Activated naive CD4-positive, alpha-beta T cell treated with anti-CD3 and anti-CD28 coated beads for 36 hours (primary cell): ENCODE measurements at regions of chr10 and their contacts with region 1.

Region 1: GRCh38 chr10:100009793-100010676 is at the start of gene DNMBP:
- DNase-seq: peak; percentile 82
- H3K4me3 Mint-ChIP-seq: peak within 1 kb of the TSS; percentile 85
- H3K27ac Mint-ChIP-seq: peak within 1 kb of the TSS; percentile 37
- H3K4me1 Mint-ChIP-seq: peaks cover 38% of the 10 kb centered on the region
- H3K27me3 Mint-ChIP-seq: peaks cover 7% of the 10 kb centered on the region
- total RNA-seq, gene DNMBP: 2.2 to 2.4 TPM

Region 2: DNA sequence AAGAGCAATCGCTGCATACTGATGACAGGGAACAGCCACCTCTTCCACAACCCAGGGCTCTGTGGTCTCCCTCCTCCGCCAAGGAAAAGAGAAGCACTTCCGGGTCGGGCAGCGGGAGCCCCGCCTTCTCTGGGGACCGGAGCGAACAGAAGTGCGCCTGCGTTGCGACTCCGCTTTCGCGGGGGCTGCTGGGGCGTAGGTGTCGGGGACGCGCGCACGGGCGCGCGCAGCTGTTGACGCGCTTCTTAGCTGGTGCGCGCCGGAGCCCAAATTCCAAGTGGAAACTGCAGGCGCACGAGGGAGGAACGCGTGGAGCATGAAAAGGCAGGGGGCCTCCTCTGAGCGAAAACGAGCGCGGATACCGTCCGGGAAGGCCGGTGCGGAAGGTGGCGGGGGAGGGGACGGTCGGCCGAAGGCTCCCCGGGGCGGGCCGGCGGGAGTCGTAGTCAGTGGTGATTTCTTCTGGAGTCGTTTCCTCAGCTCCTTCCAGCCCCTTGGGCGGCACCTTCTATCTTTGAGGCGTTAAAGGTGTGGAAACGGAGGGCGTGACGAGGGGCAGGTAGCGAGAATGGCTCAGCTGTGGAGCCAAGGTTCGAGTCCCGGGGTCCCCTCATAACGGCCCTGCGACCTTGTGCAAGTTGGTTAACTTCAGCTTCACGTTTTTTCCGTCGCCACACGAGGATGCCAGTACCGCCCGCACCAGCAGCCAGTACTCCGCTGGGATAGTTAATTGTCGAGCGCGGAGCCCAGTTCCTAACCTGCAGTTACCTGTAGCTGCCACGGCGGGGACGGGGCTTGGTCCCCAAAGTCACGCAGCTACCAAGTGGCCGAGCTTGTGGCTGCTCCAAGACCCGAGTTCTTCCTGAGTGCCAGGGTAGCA is 277.8 kb before region 1 on chr10 and contains the starts of genes COX15 and CUTC:
- CTCF ChIA-PET with region 1: no interaction called
- intact Hi-C with region 1: loop called (anchors 5 kb)
- DNase-seq: peak; percentile 96
- H3K4me3 Mint-ChIP-seq: peak within 1 kb of the TSS; percentile 99
- H3K27ac Mint-ChIP-seq: peak within 1 kb of the TSS; percentile 96
- H3K4me1 Mint-ChIP-seq: peaks cover 32% of the 10 kb centered on the region
- H3K27me3 Mint-ChIP-seq: no peaks in the 10 kb centered on the region
- total RNA-seq, gene COX15: 36.3 to 38.8 TPM
- total RNA-seq, gene CUTC: 21.6 to 21.9 TPM

Region 3: DNA sequence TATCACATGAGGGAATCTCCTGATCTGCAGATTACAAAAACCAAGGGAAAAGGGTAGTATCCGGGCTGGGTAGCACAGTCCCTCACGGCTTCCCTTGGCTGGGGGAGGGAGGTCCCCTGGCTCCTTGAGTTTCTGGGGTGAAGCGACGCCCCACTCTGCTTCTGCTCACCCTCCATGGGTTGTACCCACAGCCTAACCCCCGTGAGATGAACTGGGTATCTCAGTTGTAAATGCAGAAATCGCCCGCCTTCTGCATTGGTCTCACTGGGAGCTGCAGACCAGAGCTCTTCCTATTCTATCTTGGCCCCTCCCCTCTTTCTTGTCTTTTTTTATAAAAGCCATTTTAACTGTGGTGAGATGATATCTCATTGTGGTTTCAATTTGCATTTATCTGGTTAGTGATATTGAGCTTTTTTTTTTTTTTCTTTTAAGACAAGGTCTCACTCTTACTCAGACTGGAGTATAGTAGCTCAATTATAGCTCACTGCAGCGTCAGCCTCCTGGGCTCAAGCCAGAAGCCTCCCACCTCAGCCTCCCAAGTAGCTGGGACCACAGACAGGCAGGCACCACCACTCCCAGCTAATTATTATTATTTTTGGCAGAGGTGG is 139.8 kb before region 1 on chr10:
- CTCF ChIA-PET with region 1: interaction called, 8 read pairs
- intact Hi-C with region 1: loop called (anchors 1 kb)
- DNase-seq: peak; percentile 75
- H3K4me3 Mint-ChIP-seq: no peak overlapping the region
- H3K27ac Mint-ChIP-seq: peak overlapping the region; percentile 46
- H3K4me1 Mint-ChIP-seq: peaks cover 14% of the 10 kb centered on the region
- H3K27me3 Mint-ChIP-seq: peaks cover 80% of the 10 kb centered on the region

Region 4: DNA sequence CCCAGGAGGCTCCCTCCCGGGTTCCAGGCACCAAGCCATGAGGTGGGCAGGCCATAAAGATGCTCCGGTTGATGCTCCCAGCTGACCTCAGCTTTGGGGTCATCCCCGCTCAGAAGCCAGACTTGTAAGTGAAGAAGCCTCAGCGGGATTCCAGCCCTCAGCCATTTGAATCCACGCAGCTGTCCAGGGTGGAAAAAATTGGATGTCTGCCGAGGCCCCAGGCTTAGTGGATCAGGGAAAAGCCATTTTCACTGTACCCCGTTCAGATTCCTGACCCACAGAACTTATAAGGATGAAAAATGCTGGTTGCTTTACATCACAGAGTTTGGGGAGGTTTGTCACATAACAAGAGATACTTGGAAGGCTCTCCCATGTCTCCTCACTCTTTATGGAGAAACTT is 120.8 kb after region 1 on chr10:
- CTCF ChIA-PET with region 1: no interaction called
- intact Hi-C with region 1: no loop called
- DNase-seq: no peak
- H3K4me3 Mint-ChIP-seq: no peak overlapping the region
- H3K27ac Mint-ChIP-seq: no peak overlapping the region
- H3K4me1 Mint-ChIP-seq: no peaks in the 10 kb centered on the region
- H3K27me3 Mint-ChIP-seq: peaks cover 12% of the 10 kb centered on the region

Region 5: GRCh38 chr10:100229819-100230422 is 219.9 kb after region 1 on chr10:
- CTCF ChIA-PET with region 1: no interaction called
- intact Hi-C with region 1: loop called (anchors 5 kb)
- DNase-seq: no peak
- H3K4me3 Mint-ChIP-seq: peak overlapping the region; percentile 91
- H3K27ac Mint-ChIP-seq: peak overlapping the region; percentile 90
- H3K4me1 Mint-ChIP-seq: peaks cover 31% of the 10 kb centered on the region
- H3K27me3 Mint-ChIP-seq: no peaks in the 10 kb centered on the region